ENCODE measurements at regions of chr17 and their contacts with region 1.

Region 1: GRCh38 chr17:44533533-44534246 is 23.6 kb upstream of the FZD2 start:
- DNase-seq: peak; percentile 93 to 99
- ATAC-seq: peak; percentile 91 to 95
- H3K4me3 ChIP-seq: no peak overlapping the region
- H3K27ac ChIP-seq: peak overlapping the region; percentile 92 to 93
- H3K4me1 ChIP-seq: peaks cover 37% of the 10 kb centered on the region
- CTCF ChIP-seq: peak; percentile 99
- EP300 ChIP-seq: no peak
- POLR2A ChIP-seq: no peak
- RAD21 ChIP-seq: peak; percentile 100

Region 2: DNA sequence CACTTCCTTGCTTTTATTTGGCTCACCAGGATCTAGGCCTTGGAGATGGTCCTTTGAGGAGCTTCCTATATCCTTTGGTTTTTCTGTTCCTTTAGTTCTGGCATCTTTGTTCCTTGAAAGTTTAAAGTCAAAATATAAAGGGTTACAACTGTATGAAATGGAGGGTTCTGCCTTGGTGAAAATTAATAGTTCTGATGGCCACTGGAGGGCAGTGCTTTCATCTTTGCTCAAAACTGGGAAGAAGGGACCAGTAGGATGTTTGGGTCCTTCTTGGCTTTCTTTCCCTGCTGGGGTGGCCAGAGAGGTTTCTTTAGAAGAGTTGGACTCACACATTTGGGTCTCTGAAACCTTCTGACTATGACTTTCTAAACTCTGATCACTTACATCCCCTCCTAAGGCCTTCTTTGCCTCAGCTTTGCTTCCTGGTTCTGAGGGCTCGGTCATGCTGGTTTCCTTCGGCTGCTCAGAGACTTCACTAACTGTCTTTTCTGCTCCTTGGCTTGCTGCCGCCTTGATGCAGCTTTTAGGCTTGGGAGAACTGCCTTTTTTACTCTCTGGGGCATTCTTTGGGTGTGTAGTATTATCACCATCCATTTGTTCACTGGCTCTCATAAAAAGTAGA is 133.4 kb before region 1 on chr17:
- CTCF ChIA-PET with region 1: interaction called, 11 read pairs
- POLR2A ChIA-PET with region 1: no interaction called
- DNase-seq: peak; percentile 48
- ATAC-seq: peak; percentile 78 to 84; a peak in 5 of 6 replicates
- H3K4me3 ChIP-seq: no peak overlapping the region
- H3K27ac ChIP-seq: no peak overlapping the region
- H3K4me1 ChIP-seq: no peaks in the 10 kb centered on the region
- CTCF ChIP-seq: peak; percentile 75
- EP300 ChIP-seq: no peak
- POLR2A ChIP-seq: no peak
- RAD21 ChIP-seq: peak; percentile 59 to 63

Region 3: DNA sequence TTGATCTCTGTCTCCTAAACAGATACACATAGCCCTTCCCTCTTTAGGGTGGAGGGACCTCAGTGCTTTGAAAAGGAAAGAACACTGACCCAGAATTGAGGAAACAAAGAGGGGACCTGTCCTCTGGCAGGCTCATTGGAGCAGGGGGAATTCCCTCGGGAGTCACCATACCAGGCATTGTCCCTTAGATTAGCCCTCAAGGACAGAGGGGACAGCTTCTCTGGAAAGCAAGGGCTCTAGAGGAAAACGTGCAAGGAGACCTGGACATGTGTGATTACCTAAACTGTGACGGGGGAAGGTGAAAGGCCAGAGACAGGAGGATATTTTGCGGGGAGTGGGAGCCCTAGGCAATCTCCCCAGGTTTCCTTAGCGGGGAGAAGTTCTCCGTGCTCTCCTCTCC is 16.0 kb after region 1 on chr17:
- CTCF ChIA-PET with region 1: interaction called, 145 read pairs
- POLR2A ChIA-PET with region 1: interaction called, 4 read pairs
- DNase-seq: no peak
- ATAC-seq: no peak
- H3K4me3 ChIP-seq: no peak overlapping the region
- H3K27ac ChIP-seq: peak overlapping the region; percentile 93 to 94; a peak in 5 of 6 replicates
- H3K4me1 ChIP-seq: peaks cover 54% of the 10 kb centered on the region
- CTCF ChIP-seq: no peak
- EP300 ChIP-seq: no peak
- POLR2A ChIP-seq: no peak
- RAD21 ChIP-seq: no peak

Region 4: GRCh38 chr17:44581868-44582267 is 48.2 kb after region 1 on chr17:
- CTCF ChIA-PET with region 1: interaction called, 103 read pairs
- POLR2A ChIA-PET with region 1: interaction called, 7 read pairs
- DNase-seq: peak; percentile 68
- ATAC-seq: peak; percentile 64 to 85; a peak in 5 of 6 replicates
- H3K4me3 ChIP-seq: no peak overlapping the region
- H3K27ac ChIP-seq: peak overlapping the region in 1 of 2 experiments; percentile 59; a peak in 2 of 6 replicates
- H3K4me1 ChIP-seq: peaks cover 23% of the 10 kb centered on the region
- CTCF ChIP-seq: peak; percentile 44
- EP300 ChIP-seq: no peak
- POLR2A ChIP-seq: no peak
- RAD21 ChIP-seq: peak; percentile 59 to 73

Region 5: DNA sequence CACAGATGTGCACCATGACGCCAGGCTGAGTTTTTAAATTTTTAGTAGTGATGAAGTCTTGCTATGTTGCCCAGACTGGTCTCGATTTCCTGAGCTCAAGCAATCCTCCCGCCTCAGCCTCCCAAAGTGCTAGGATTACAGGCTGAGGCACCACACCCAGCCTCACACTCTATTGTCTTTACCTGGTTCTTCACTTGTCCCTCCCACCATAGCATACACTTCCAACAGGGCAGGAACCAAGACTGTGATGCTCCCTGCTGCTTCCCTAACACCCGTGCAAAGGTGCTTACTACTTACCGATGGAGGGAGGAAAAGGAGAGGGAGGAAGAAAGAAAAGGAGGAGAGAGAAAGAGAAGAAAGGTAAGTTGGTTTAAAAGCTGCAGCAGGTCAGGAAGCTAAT is 81.2 kb after region 1 on chr17:
- CTCF ChIA-PET with region 1: interaction called, 66 read pairs
- POLR2A ChIA-PET with region 1: no interaction called
- DNase-seq: no peak
- ATAC-seq: no peak
- H3K4me3 ChIP-seq: no peak overlapping the region
- H3K27ac ChIP-seq: no peak overlapping the region
- H3K4me1 ChIP-seq: no peaks in the 10 kb centered on the region
- CTCF ChIP-seq: no peak
- EP300 ChIP-seq: no peak
- POLR2A ChIP-seq: no peak
- RAD21 ChIP-seq: no peak

Region 6: GRCh38 chr17:44648963-44649362 is 115.3 kb after region 1 on chr17:
- CTCF ChIA-PET with region 1: interaction called, 43 read pairs
- POLR2A ChIA-PET with region 1: no interaction called
- DNase-seq: no peak
- ATAC-seq: peak; percentile 51 to 54; a peak in 2 of 6 replicates
- H3K4me3 ChIP-seq: no peak overlapping the region
- H3K27ac ChIP-seq: no peak overlapping the region
- H3K4me1 ChIP-seq: no peaks in the 10 kb centered on the region
- CTCF ChIP-seq: no peak
- EP300 ChIP-seq: no peak
- POLR2A ChIP-seq: no peak
- RAD21 ChIP-seq: no peak

Measured in A549 (cell line).